Posterior cingulate gyrus (tissue), 11 donors: ENCODE measurements at regions of chr15 and their contacts with region 1.

Region 1: GRCh38 chr15:30043211-30043655 is 39.5 kb upstream of the GOLGA8J start:
- DNase-seq: no peak

Region 2: DNA sequence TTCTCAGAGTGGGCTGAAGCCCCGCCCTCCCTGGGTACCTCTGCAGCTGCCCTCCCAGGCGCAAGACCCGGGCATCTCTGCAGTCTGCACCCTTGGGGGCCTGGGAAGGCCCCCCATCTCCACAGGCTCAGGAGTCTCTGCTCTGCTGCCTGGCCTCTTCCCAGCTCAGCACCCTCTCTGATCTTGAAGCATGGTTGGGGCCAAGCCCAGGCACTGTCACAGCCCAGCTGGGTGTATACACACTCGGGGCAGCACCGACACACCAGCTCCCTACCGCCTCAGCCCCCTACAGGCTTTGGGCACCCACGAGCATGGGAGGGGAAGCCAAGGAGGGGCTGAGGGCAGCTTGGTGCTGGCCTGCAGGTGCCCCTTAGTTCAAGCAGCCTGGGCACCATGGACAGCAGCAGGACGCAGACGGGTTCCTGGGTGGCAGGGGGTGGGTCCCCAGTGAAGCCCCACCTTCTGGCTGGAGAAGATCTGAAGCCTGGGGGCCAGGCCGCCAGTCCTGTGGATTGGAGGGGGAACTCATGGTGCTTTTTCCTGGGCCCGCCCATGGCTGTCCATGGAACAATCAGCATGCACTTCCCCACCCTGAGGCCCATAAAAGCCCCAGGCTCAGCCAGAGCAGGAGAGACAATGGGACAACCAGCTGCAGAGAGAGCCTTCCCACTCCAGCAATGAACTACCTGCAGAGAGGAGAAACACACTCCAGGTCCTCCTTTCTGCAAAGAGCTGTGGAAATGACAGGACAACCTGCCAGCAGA is 391.6 kb before region 1 on chr15:
- intact Hi-C with region 1: no loop called
- DNase-seq: peak in 1 of 10 donors; percentile 48

Region 3: GRCh38 chr15:29942143-29942542 is 101.1 kb before region 1 on chr15:
- intact Hi-C with region 1: loop called (anchors 2 kb)
- DNase-seq: peak in 1 of 10 donors; percentile 53

Region 4: GRCh38 chr15:30001602-30002001 is 41.6 kb before region 1 on chr15:
- intact Hi-C with region 1: loop called (anchors 5 kb)
- DNase-seq: peak; percentile 78 to 98 (median 87)